ENCODE measurements at regions of chr4 and their contacts with region 1.

Region 1: DNA sequence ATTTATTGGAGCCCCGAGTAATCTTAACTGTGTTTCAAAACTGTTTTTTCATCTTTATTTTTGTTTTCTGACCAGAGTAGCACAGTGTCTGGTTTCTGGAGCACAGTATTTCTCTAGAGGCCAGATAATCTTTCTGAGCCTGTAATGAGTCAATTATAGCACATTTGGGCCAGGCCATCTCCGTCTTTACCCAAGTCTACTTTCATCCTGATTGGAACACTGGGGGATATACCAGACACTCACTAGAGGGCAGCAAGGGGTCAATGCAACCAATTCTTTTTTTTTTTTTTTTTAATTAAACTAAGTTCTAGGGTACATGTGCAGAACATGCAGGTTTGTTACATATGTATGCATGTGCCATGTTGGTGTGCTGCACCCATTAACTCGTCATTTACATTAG is 282.0 kb downstream of the ARHGAP24 start:
- DNase-seq: no peak
- ATAC-seq: peak; percentile 70 to 85 (median 74)
- H3K4me3 ChIP-seq: no peak overlapping the region
- H3K27ac ChIP-seq: no peak overlapping the region
- H3K4me1 ChIP-seq: no peaks in the 10 kb centered on the region
- H3K27me3 ChIP-seq: no peaks in the 10 kb centered on the region
- CTCF ChIP-seq: peak; percentile 27 to 47 (median 44)
- POLR2A ChIP-seq: no peak

Region 2: GRCh38 chr4:85084380-85085094 is 672.4 kb before region 1 on chr4:
- intact Hi-C with region 1: loop called in 1 of 2 experiments (anchors 10 kb)
- DNase-seq: no peak
- ATAC-seq: peak; percentile 75 to 82 (median 78)
- H3K4me3 ChIP-seq: no peak overlapping the region
- H3K27ac ChIP-seq: no peak overlapping the region
- H3K4me1 ChIP-seq: no peaks in the 10 kb centered on the region
- H3K27me3 ChIP-seq: no peaks in the 10 kb centered on the region
- CTCF ChIP-seq: peak; percentile 53 to 70 (median 68)
- POLR2A ChIP-seq: no peak

Region 3: GRCh38 chr4:85866508-85866907 is 109.6 kb after region 1 on chr4:
- intact Hi-C with region 1: no loop called
- DNase-seq: no peak
- ATAC-seq: no peak
- H3K4me3 ChIP-seq: no peak overlapping the region
- H3K27ac ChIP-seq: no peak overlapping the region
- H3K4me1 ChIP-seq: peaks cover 0 to 4% (median 0%) of the 10 kb centered on the region in 4 donors
- H3K27me3 ChIP-seq: no peaks in the 10 kb centered on the region
- CTCF ChIP-seq: no peak
- POLR2A ChIP-seq: no peak

Measured in right lobe of liver (tissue), 6 donors.